A549 (cell line): ENCODE measurements at regions of chr19 and their contacts with region 1.

Region 1: GRCh38 chr19:40512473-40513344 is 45.9 kb downstream of the SPTBN4 start:
- DNase-seq: peak in 1 of 2 experiments; percentile 65
- ATAC-seq: peak; percentile 73 to 76
- H3K4me3 ChIP-seq: peak overlapping the region; percentile 37
- H3K27ac ChIP-seq: 0 out of 6 replicates have a peak overlapping the region, but pooled peaks of 1 of the 2 experiments have one; percentile 0
- H3K4me1 ChIP-seq: peaks cover 5% of the 10 kb centered on the region; the same call in 1 of the 3 replicates
- CTCF ChIP-seq: no peak; the same call in 2 of the 3 replicates
- EP300 ChIP-seq: no peak
- POLR2A ChIP-seq: no peak
- RAD21 ChIP-seq: no peak

Region 2: GRCh38 chr19:40489882-40490230 is 22.9 kb before region 1 on chr19:
- CTCF ChIA-PET with region 1: interaction called, 11 read pairs
- POLR2A ChIA-PET with region 1: no interaction called
- DNase-seq: no peak
- ATAC-seq: peak in 1 of 2 experiments; percentile 2; a peak in 1 of 6 replicates
- H3K4me3 ChIP-seq: no peak overlapping the region
- H3K27ac ChIP-seq: no peak overlapping the region
- H3K4me1 ChIP-seq: 0 out of 3 replicates have a peak, but pooled peaks cover 6% of the 10 kb centered on the region
- CTCF ChIP-seq: no peak
- EP300 ChIP-seq: no peak
- POLR2A ChIP-seq: no peak
- RAD21 ChIP-seq: no peak

Region 3: GRCh38 chr19:40523322-40524047 is 10.8 kb after region 1 on chr19:
- CTCF ChIA-PET with region 1: interaction called, 45 read pairs
- POLR2A ChIA-PET with region 1: no interaction called
- DNase-seq: peak; percentile 93 to 96
- ATAC-seq: peak; percentile 80 to 90
- H3K4me3 ChIP-seq: peak overlapping the region; percentile 9; the same call in 2 of the 3 replicates
- H3K27ac ChIP-seq: peak overlapping the region; percentile 57 to 73
- H3K4me1 ChIP-seq: peaks cover 21% of the 10 kb centered on the region
- CTCF ChIP-seq: peak; percentile 92
- EP300 ChIP-seq: no peak
- POLR2A ChIP-seq: no peak
- RAD21 ChIP-seq: peak; percentile 62 to 73

Region 4: GRCh38 chr19:40529093-40529954 is 16.6 kb after region 1 on chr19:
- CTCF ChIA-PET with region 1: interaction called, 45 read pairs
- POLR2A ChIA-PET with region 1: no interaction called
- DNase-seq: peak; percentile 94 to 100
- ATAC-seq: peak; percentile 37 to 78
- H3K4me3 ChIP-seq: peak overlapping the region; percentile 50
- H3K27ac ChIP-seq: peak overlapping the region; percentile 55 to 79
- H3K4me1 ChIP-seq: peaks cover 18% of the 10 kb centered on the region
- CTCF ChIP-seq: peak; percentile 99
- EP300 ChIP-seq: 0 out of 5 replicates have a peak, but pooled peaks of 1 of the 2 experiments have one; percentile 17
- POLR2A ChIP-seq: no peak
- RAD21 ChIP-seq: peak; percentile 43 to 72; a peak in 4 of 5 replicates

Region 5: DNA sequence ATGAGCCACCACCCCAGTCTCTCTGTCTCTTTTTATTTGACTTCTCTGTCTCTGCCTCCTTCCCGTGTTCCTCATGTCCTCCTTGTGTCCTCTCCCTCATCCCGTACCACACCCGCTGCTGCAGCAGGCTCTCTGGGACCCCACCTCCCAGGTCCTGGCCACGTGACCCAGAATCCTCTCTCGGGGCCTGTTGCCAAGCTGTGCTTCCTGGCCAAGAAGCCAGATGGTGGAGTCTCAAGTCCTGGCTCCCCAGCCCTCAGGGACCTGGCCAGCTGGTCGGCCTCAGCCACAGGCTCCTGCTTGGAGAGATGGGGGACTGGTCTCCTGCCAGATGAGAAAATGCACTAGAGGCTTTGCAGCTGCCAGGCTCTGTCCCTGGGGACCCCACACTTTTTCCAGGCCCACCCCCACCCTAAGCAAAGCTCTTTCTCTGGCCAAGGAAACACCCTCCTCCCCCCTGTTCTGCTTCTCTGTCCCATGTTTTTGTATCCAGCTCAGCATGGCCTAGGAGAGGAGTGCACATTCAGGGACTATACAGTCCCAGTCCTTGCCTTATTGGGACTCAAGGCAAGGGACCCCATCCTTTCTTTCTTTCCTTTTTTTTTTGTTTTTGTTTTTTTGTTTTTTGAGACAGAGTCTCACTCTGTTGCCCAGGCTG is 29.6 kb after region 1 on chr19:
- CTCF ChIA-PET with region 1: interaction called, 35 read pairs
- POLR2A ChIA-PET with region 1: no interaction called
- DNase-seq: no peak
- ATAC-seq: no peak
- H3K4me3 ChIP-seq: no peak overlapping the region
- H3K27ac ChIP-seq: no peak overlapping the region
- H3K4me1 ChIP-seq: no peaks in the 10 kb centered on the region
- CTCF ChIP-seq: no peak
- EP300 ChIP-seq: no peak
- POLR2A ChIP-seq: no peak
- RAD21 ChIP-seq: no peak

Region 6: DNA sequence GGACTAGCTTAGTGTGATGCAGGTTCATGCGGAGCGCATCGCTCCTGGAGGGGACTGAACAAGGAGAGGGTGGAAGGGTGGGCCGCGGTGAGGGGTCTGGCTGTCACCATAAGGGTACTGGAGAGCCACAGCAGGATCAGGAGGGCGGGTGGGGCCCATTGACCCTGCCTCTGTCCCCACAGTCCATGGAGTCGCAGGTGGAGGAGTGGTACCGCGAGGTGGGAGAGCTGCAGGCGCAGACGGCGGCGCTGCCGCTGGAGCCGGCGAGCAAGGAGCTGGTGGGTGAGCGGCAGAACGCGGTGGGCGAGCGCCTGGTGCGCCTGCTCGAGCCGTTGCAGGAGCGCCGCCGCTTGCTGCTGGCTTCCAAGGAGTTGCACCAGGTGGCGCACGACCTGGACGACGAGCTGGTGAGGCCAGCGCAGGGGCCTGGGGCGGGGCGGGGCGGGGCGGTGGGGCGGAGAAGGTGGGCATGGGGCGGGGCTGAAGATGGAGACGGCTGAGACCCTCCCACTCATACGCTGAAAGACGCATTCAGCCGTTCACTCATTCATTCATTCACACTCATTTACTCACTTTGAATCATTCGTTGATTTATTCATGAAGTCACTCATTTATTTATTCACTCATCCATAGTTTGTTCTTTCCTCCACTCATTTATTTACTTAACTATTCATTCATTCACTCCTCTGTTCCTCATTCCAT is 36.4 kb after region 1 on chr19:
- CTCF ChIA-PET with region 1: interaction called, 35 read pairs
- POLR2A ChIA-PET with region 1: no interaction called
- DNase-seq: peak; percentile 92
- ATAC-seq: peak; percentile 97 to 99
- H3K4me3 ChIP-seq: peak overlapping the region; percentile 33
- H3K27ac ChIP-seq: peak overlapping the region; percentile 49 to 68; a peak in 4 of 6 replicates
- H3K4me1 ChIP-seq: peaks cover 5% of the 10 kb centered on the region
- CTCF ChIP-seq: peak; percentile 85
- EP300 ChIP-seq: no peak; a peak in 1 of 5 replicates
- POLR2A ChIP-seq: no peak
- RAD21 ChIP-seq: peak; percentile 63 to 90